GM12878 (cell line): ENCODE measurements at regions of chr15 and their contacts with region 1.

Region 1: DNA sequence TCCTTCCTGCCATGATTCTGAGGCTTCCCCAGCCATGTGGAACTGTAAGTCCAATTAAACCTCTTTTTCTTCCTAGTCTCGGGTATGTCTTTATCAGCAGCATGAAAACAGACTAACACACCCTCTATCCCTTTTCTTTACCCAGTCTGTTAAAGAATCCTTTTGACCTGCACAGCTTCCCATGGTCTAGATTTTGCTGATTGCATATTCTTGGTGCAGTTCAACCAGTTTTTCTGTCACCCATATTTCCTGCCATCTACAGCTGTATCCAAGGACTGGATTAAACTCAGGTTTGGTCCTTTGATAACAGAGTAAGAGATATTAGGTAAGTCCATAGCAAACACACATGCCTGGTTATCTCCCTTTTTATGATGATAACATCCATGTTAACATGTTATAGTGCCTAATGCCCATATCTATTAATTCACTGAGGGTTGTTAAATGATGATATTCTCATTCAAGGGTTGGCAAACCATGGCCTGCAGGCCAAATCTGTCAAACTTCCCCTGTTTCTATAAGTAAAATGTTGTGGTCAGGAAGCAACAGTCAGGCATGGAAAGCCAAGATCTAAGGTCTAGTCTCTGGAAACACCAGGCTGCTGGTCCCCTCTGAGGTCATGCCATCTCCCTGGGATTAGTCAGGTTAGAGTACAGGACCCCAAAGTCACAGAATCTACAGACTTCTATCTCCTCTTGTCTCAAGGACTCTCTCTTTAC is 14.9 kb upstream of the HERC1 start:
- DNase-seq: no peak
- ATAC-seq: peak; percentile 41; the same call in 2 of the 3 replicates
- H3K4me3 ChIP-seq: no peak overlapping the region
- H3K27ac ChIP-seq: no peak overlapping the region
- H3K4me1 ChIP-seq: peaks cover 12% of the 10 kb centered on the region
- H3K27me3 ChIP-seq: no peaks in the 10 kb centered on the region
- CTCF ChIP-seq: no peak
- EP300 ChIP-seq: no peak
- POLR2A ChIP-seq: no peak
- RAD21 ChIP-seq: no peak

Region 2: GRCh38 chr15:63860155-63860554 is 11.5 kb after region 1 on chr15:
- CTCF ChIA-PET with region 1: interaction called, 4 read pairs
- POLR2A ChIA-PET with region 1: interaction called, 9 read pairs
- RAD21 ChIA-PET with region 1: no interaction called
- SMC1A ChIA-PET with region 1: interaction called, 16 read pairs
- in situ Hi-C with region 1: no loop called
- intact Hi-C with region 1: no loop called
- DNase-seq: no peak
- ATAC-seq: no peak
- H3K4me3 ChIP-seq: no peak overlapping the region
- H3K27ac ChIP-seq: peak overlapping the region; percentile 31
- H3K4me1 ChIP-seq: peaks cover 9% of the 10 kb centered on the region
- H3K27me3 ChIP-seq: no peaks in the 10 kb centered on the region
- CTCF ChIP-seq: no peak
- EP300 ChIP-seq: no peak
- POLR2A ChIP-seq: no peak
- RAD21 ChIP-seq: no peak